Activated CD4-positive, alpha-beta T cell treated with anti-CD3 and anti-CD28 coated beads, Interleukin-2, amount 10 ng/mL, durations not matched to agents 24 days and 14 days (primary cell): ENCODE measurements at regions of chr13 and their contacts with region 1.

Region 1: DNA sequence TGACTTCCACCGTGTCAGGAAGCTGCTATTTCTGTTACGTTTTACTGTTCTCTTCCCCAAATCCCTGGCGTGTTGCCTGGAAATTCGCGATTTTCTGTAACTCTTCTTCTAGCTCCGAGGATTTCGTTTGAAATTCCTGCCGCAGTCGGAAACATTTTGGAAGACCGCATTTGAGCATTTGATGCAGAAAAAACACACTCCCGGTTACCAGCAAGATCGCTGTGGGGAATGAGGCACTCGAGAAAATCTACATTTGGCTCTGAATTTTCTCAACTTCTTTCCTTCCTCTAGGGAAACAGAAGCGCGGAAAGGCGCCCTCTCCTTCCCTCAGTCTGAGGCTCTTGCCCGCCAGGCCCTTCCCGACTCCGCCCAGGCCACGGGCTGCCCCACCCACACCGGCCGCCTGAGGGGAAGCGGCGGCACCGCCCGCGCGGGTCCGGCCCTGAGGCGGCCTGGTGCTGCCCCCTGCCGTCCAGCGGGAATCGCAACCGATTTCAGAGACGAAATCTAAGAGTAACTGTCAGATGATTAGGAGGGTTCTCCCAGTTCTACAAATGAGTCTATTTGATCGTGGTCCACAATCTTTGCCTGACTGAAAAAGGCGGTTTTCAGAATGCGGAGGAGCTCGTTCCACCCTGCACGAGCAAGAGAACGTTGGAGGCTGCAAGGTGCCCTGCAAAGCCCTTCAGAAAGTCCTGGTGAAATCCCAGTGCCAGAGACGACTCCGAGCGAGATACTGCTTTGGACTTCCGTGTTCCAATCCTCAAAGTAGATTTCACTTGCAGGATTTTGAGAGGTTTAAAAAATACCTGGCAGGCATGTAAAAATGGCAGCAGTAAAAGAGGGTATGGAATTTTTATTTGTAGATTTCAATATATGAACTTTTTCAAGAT is 18.4 kb upstream of the TUBGCP3 start:
- DNase-seq: peak; percentile 97
- H3K4me3 Mint-ChIP-seq: peak overlapping the region; percentile 87
- H3K27ac Mint-ChIP-seq: peak overlapping the region; percentile 47
- H3K4me1 Mint-ChIP-seq: peaks cover 7% of the 10 kb centered on the region
- H3K27me3 Mint-ChIP-seq: peaks cover 42% of the 10 kb centered on the region

Region 2: GRCh38 chr13:111474136-111475002 is 1132.0 kb before region 1 on chr13:
- intact Hi-C with region 1: loop called (anchors 10 kb)
- DNase-seq: no peak
- H3K4me3 Mint-ChIP-seq: no peak overlapping the region
- H3K27ac Mint-ChIP-seq: no peak overlapping the region
- H3K4me1 Mint-ChIP-seq: no peaks in the 10 kb centered on the region
- H3K27me3 Mint-ChIP-seq: no peaks in the 10 kb centered on the region

Region 3: DNA sequence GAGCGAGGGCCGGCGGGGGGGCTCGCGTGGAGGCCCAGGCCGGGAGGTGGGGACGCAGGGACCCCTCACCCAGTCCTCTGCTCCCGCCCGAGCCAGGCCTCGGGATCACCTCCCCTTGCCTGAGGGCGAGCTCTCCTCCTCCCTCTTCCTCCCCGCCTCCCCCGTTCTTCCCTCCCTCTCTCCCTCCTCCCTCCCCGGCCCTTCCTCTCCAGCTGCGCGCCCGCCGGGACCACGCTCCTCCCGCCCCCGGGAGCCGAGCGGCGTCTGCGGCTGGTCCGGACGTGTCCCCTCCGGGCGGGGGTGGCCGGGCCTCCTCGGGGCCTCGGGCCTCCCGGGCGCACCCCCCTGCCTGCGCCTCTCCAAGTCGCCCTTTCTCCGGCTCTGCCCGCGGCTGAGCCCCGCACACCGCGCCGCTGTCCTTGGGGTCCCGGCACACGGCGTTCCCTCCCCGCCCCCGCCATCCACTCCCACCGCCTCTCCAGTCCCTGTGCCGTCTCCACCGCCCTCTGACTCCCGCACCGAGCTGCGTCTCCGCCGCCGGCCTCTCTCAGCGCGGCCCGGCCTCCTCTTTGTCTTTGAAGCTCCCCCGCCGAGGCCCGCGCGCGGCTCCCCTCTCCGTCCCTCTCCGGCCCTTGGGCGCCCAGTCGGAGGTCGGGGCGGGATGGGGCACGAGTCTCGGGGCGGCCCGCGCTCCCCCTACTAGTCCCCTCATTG is 533.7 kb before region 1 on chr13:
- intact Hi-C with region 1: loop called (anchors 10 kb)
- DNase-seq: no peak
- H3K4me3 Mint-ChIP-seq: no peak overlapping the region
- H3K27ac Mint-ChIP-seq: no peak overlapping the region
- H3K4me1 Mint-ChIP-seq: no peaks in the 10 kb centered on the region
- H3K27me3 Mint-ChIP-seq: peaks cover 67% of the 10 kb centered on the region

Region 4: GRCh38 chr13:112434032-112434431 is 172.3 kb before region 1 on chr13:
- intact Hi-C with region 1: no loop called
- DNase-seq: no peak
- H3K4me3 Mint-ChIP-seq: no peak overlapping the region
- H3K27ac Mint-ChIP-seq: no peak overlapping the region
- H3K4me1 Mint-ChIP-seq: no peaks in the 10 kb centered on the region
- H3K27me3 Mint-ChIP-seq: no peaks in the 10 kb centered on the region

Region 5: GRCh38 chr13:112443995-112444860 is 162.1 kb before region 1 on chr13:
- intact Hi-C with region 1: loop called (anchors 5 kb)
- DNase-seq: peak; percentile 87
- H3K4me3 Mint-ChIP-seq: no peak overlapping the region
- H3K27ac Mint-ChIP-seq: no peak overlapping the region
- H3K4me1 Mint-ChIP-seq: no peaks in the 10 kb centered on the region
- H3K27me3 Mint-ChIP-seq: peaks cover 9% of the 10 kb centered on the region

Region 6: GRCh38 chr13:112510002-112510780 is 96.2 kb before region 1 on chr13:
- intact Hi-C with region 1: loop called (anchors 5 kb)
- DNase-seq: no peak
- H3K4me3 Mint-ChIP-seq: no peak overlapping the region
- H3K27ac Mint-ChIP-seq: no peak overlapping the region
- H3K4me1 Mint-ChIP-seq: peaks cover 2% of the 10 kb centered on the region
- H3K27me3 Mint-ChIP-seq: no peaks in the 10 kb centered on the region

Region 7: DNA sequence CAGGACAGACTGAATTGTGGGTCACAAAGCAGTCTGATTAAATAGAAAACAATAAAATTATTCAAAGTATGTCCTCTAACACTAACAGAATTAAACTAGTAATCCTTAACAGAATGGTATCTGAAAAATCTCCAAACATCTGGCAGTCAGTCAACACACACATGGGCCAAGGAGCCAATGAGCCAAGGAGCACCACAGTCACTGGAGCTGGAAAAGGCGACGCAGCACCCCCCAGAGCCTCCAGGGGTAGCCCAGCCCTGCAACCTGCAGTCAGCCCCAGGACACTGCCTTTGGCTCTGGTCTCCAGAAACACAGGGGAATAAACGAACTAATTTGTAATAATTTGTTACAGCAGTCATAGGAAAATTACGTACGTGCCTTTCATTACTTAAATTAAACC is 30.7 kb before region 1 on chr13:
- intact Hi-C with region 1: no loop called
- DNase-seq: no peak
- H3K4me3 Mint-ChIP-seq: no peak overlapping the region
- H3K27ac Mint-ChIP-seq: no peak overlapping the region
- H3K4me1 Mint-ChIP-seq: peaks cover 35% of the 10 kb centered on the region
- H3K27me3 Mint-ChIP-seq: no peaks in the 10 kb centered on the region

Region 8: DNA sequence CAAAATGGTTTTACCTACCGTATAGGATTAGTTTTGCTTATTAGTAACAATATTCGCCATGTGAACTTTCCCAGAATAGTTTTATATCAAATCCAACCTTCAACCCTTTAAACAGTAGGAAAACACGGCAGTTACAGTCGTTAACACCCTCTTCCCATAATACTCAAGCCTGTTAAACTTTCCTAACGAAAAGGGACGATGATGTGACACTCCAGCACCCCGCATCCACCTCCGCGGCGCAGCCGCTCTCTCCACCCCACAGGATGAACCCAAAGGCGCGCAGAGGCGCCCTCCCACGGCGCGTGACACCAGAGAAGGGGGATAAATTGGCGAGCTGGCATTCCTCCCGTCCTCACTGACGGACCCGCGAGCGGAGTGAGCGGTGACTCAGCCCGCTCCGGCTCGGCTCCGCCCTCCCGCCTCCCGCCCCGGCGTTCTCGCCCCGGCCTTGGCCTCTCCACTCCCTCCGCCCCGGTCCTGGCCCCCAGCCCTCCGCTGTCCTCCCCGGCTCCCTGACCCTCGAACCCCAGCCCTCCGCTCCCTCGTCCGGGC is 19.1 kb before region 1 on chr13:
- intact Hi-C with region 1: loop called (anchors 1 kb)
- DNase-seq: peak; percentile 90
- H3K4me3 Mint-ChIP-seq: peak overlapping the region; percentile 98
- H3K27ac Mint-ChIP-seq: peak overlapping the region; percentile 96
- H3K4me1 Mint-ChIP-seq: peaks cover 32% of the 10 kb centered on the region
- H3K27me3 Mint-ChIP-seq: no peaks in the 10 kb centered on the region